Left ventricle myocardium inferior (tissue), 1 donor: ENCODE measurements at regions of chr9 and their contacts with region 1.

Region 1: GRCh38 chr9:101764472-101764871 is 26.0 kb upstream of the GRIN3A start:
- DNase-seq: no peak
- H3K4me3 ChIP-seq: no peak overlapping the region
- H3K27ac ChIP-seq: no peak overlapping the region
- H3K4me1 ChIP-seq: no peaks in the 10 kb centered on the region
- H3K27me3 ChIP-seq: no peaks in the 10 kb centered on the region
- CTCF ChIP-seq: no peak

Region 2: DNA sequence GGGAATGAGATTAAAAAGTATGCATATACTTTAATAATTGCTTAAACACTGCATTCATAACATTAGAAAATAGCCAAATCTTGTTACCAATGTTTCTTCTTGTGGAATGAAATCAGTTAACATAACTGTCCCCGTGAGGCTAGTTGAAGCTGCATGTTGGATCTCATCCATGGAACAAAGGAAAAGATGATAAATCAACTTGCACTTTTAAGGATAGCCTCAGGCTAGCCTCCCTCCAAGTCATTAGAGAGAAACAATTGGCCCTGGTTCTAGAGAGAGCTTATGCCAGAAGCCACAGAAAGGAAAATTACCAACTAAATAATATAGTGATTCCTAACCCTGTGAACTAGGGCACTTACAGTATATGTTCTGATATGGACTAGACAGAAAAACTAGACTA is 92.9 kb before region 1 on chr9:
- intact Hi-C with region 1: no loop called
- DNase-seq: no peak
- H3K4me3 ChIP-seq: no peak overlapping the region
- H3K27ac ChIP-seq: no peak overlapping the region
- H3K4me1 ChIP-seq: no peaks in the 10 kb centered on the region
- H3K27me3 ChIP-seq: no peaks in the 10 kb centered on the region
- CTCF ChIP-seq: no peak

Region 3: DNA sequence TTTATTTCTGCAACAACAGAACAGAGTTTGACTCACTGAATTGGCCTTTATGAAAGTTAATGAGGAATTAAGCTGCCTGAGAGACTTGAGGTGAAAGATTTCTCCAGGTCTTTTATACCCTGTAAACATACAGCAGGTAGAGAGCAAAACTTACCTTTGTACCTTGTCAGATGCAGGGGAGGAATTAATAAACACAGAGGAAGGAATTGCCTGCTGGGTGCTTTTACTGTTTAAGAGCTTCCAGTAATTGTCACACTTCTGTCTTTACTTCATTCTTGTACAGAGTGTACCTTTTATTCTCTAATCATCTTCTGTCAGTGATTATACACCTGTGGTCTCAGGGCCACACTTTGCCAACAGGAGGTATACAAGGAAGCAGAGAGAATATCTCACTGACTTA is 68.0 kb after region 1 on chr9:
- intact Hi-C with region 1: loop called (anchors 10 kb)
- DNase-seq: no peak
- H3K4me3 ChIP-seq: no peak overlapping the region
- H3K27ac ChIP-seq: no peak overlapping the region
- H3K4me1 ChIP-seq: no peaks in the 10 kb centered on the region
- H3K27me3 ChIP-seq: no peaks in the 10 kb centered on the region
- CTCF ChIP-seq: no peak

Region 4: GRCh38 chr9:102479191-102479590 is 714.7 kb after region 1 on chr9:
- intact Hi-C with region 1: no loop called
- DNase-seq: no peak
- H3K4me3 ChIP-seq: no peak overlapping the region
- H3K27ac ChIP-seq: no peak overlapping the region
- H3K4me1 ChIP-seq: no peaks in the 10 kb centered on the region
- H3K27me3 ChIP-seq: no peaks in the 10 kb centered on the region
- CTCF ChIP-seq: no peak